Mammary epithelial cell (primary cell): ENCODE measurements at regions of chr2 and their contacts with region 1.

Region 1: GRCh38 chr2:72137498-72138010 is 10.1 kb downstream of the CYP26B1 start:
- DNase-seq: peak; percentile 28
- H3K4me3 ChIP-seq: no peak overlapping the region
- H3K27ac ChIP-seq: no peak overlapping the region
- H3K4me1 ChIP-seq: no peaks in the 10 kb centered on the region
- H3K27me3 ChIP-seq: no peaks in the 10 kb centered on the region
- CTCF ChIP-seq: peak; percentile 84 to 98

Region 2: GRCh38 chr2:71578767-71579342 is 558.7 kb before region 1 on chr2:
- CTCF ChIA-PET with region 1: no interaction called
- dilution Hi-C with region 1: loop called (anchors 25 kb)
- in situ Hi-C with region 1: no loop called
- intact Hi-C with region 1: no loop called
- DNase-seq: no peak
- H3K4me3 ChIP-seq: no peak overlapping the region
- H3K27ac ChIP-seq: no peak overlapping the region
- H3K4me1 ChIP-seq: no peaks in the 10 kb centered on the region
- H3K27me3 ChIP-seq: no peaks in the 10 kb centered on the region
- CTCF ChIP-seq: no peak

Region 3: GRCh38 chr2:71933467-71934319 is 203.9 kb before region 1 on chr2:
- CTCF ChIA-PET with region 1: no interaction called
- dilution Hi-C with region 1: loop called (anchors 25 kb)
- in situ Hi-C with region 1: no loop called
- intact Hi-C with region 1: no loop called
- DNase-seq: peak; percentile 15
- H3K4me3 ChIP-seq: no peak overlapping the region
- H3K27ac ChIP-seq: no peak overlapping the region
- H3K4me1 ChIP-seq: no peaks in the 10 kb centered on the region
- H3K27me3 ChIP-seq: no peaks in the 10 kb centered on the region
- CTCF ChIP-seq: peak; percentile 26 to 44

Region 4: DNA sequence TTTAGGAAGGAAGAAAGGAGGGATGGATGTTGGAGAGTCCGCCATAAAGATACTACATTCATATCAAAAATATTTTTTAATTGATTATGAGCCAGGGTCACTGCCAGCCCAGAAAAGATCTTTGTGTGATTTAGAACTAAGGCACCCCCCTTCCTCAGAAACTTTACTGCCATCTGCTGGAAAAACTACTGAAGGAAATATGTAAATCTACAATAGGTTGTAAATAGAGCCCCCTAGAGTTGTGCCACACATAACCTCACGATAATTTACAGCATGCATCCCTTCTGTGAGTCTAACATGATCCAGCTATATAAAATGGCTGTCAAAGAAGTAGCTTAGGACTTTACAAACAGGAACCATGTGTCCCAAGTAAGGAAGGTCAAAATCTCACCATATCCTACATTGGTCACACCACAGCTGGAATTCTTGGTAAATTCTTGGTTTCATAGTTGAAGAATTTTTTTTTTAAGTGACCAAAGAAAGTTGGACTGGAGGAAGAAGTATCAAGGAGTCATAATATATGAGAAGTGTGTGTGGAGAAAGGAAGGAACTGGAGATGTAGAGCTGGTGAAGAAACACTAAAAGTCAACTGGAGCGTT is 142.4 kb before region 1 on chr2:
- CTCF ChIA-PET with region 1: no interaction called
- dilution Hi-C with region 1: no loop called
- in situ Hi-C with region 1: no loop called
- intact Hi-C with region 1: loop called (anchors 5 kb)
- DNase-seq: peak; percentile 8
- H3K4me3 ChIP-seq: no peak overlapping the region
- H3K27ac ChIP-seq: no peak overlapping the region
- H3K4me1 ChIP-seq: no peaks in the 10 kb centered on the region
- H3K27me3 ChIP-seq: no peaks in the 10 kb centered on the region
- CTCF ChIP-seq: peak; percentile 18 to 55

Region 5: DNA sequence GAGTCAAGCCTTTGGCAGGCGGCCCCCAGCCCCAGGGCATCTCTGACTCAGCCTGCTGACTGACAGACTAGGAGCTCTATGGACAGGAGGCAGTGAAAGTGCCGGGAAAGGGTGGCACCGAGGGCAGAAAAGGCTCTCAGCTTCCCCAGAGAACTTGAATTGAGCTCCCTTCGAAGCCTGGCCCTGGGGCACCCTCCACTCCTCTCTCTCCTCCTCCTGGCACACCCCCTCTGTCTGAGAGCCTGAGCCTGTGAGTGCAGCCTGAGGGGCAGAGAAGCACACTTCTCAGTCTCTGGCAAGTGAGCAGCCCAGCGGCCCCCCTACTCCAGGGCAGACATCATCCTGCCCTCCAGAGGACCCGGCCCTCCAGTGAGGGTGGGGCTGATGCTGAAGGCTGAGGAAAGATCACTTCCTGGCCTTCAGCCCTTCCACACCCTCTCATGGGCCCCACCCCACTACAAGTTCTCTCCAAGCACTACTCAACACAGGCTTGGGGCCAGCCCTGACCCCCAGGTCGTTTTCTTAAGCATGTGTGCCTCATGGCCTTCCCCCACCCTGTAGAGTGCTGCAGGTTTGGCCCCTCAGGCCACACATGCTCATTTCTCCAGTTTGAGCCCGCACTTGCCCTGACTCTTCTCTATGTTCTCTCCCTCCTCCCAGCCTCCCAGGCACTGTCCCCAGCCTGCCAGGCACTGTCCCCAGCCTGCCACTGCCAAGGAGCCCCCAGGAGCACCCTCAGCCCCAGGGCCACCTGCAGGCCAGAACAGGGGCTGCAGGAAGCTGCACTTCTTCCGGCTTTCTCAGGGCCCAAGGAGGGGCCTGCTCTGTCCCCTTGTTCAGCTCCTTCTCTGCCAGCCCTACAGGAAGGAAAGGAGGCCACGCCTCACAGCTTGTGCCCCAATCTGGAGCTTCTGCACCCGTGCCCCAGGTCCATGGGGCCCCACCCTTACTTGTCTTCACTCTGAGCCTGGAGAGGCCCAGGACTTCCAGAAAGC is 21.7 kb before region 1 on chr2:
- CTCF ChIA-PET with region 1: no interaction called
- dilution Hi-C with region 1: no loop called
- in situ Hi-C with region 1: no loop called
- intact Hi-C with region 1: loop called (anchors 1 kb)
- DNase-seq: peak; percentile 98
- H3K4me3 ChIP-seq: no peak overlapping the region
- H3K27ac ChIP-seq: peak overlapping the region; percentile 48
- H3K4me1 ChIP-seq: peaks cover 34% of the 10 kb centered on the region
- H3K27me3 ChIP-seq: no peaks in the 10 kb centered on the region
- CTCF ChIP-seq: peak; percentile 39 to 46

Region 6: GRCh38 chr2:72330668-72331067 is 193.1 kb after region 1 on chr2:
- CTCF ChIA-PET with region 1: no interaction called
- dilution Hi-C with region 1: no loop called
- in situ Hi-C with region 1: no loop called
- intact Hi-C with region 1: no loop called
- DNase-seq: no peak
- H3K4me3 ChIP-seq: no peak overlapping the region
- H3K27ac ChIP-seq: no peak overlapping the region
- H3K4me1 ChIP-seq: no peaks in the 10 kb centered on the region
- H3K27me3 ChIP-seq: no peaks in the 10 kb centered on the region
- CTCF ChIP-seq: no peak